Activated B cell treated with CpG ODN at 0.5 μM for 24 hours (primary cell): ENCODE measurements at regions of chr22 and their contacts with region 1.

Region 1: GRCh38 chr22:23893943-23894709 is at the start of gene MIF:
- DNase-seq: peak; percentile 100
- ATAC-seq: peak; percentile 88
- H3K4me3 Mint-ChIP-seq: peak within 1 kb of the TSS; percentile 96
- H3K27ac Mint-ChIP-seq: peak within 1 kb of the TSS; percentile 96
- H3K4me1 Mint-ChIP-seq: peaks cover 25% of the 10 kb centered on the region
- H3K27me3 Mint-ChIP-seq: no peaks in the 10 kb centered on the region
- CTCF ChIP-seq: peak; percentile 44
- total RNA-seq, gene MIF: 308 and 349 TPM in 2 replicates

Region 2: GRCh38 chr22:23800297-23801237 is 93.6 kb before region 1 on chr22:
- CTCF ChIA-PET with region 1: interaction called, 3 read pairs
- POLR2A ChIA-PET with region 1: interaction called, 3 read pairs
- intact Hi-C with region 1: loop called (anchors 1 kb)
- DNase-seq: peak; percentile 68
- ATAC-seq: peak; percentile 77
- H3K4me3 Mint-ChIP-seq: peak overlapping the region; percentile 49
- H3K27ac Mint-ChIP-seq: peak overlapping the region; percentile 97
- H3K4me1 Mint-ChIP-seq: peaks cover 78% of the 10 kb centered on the region
- H3K27me3 Mint-ChIP-seq: no peaks in the 10 kb centered on the region
- CTCF ChIP-seq: no peak

Region 3: DNA sequence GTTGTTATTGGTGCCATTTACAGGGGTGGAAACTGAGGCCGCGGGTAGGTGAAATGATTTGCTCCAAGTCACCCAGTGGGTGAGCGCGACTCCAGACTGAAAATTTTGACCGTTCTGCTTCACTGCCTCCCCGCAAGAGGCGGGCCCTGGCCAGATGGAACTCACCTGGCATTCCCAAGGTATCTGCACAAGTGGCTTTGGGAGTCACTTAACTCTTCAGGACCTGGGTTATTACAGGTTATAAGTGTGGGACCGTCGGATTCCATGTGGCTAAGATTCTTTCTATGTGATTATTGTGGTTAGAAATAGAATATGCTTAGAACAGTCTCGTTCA is 117.6 kb after region 1 on chr22:
- CTCF ChIA-PET with region 1: no interaction called
- POLR2A ChIA-PET with region 1: interaction called, 14 read pairs
- intact Hi-C with region 1: loop called (anchors 5 kb)
- DNase-seq: no peak
- ATAC-seq: no peak
- H3K4me3 Mint-ChIP-seq: peak overlapping the region; percentile 98
- H3K27ac Mint-ChIP-seq: peak overlapping the region; percentile 88
- H3K4me1 Mint-ChIP-seq: peaks cover 23% of the 10 kb centered on the region
- H3K27me3 Mint-ChIP-seq: no peaks in the 10 kb centered on the region
- CTCF ChIP-seq: no peak

Region 4: GRCh38 chr22:24270638-24271408 is 376.7 kb after region 1 on chr22 and contains the start of gene SPECC1L:
- CTCF ChIA-PET with region 1: no interaction called
- POLR2A ChIA-PET with region 1: no interaction called
- intact Hi-C with region 1: no loop called
- DNase-seq: peak; percentile 96
- ATAC-seq: peak; percentile 90
- H3K4me3 Mint-ChIP-seq: peak within 1 kb of the TSS; percentile 90
- H3K27ac Mint-ChIP-seq: peak within 1 kb of the TSS; percentile 82
- H3K4me1 Mint-ChIP-seq: peaks cover 45% of the 10 kb centered on the region
- H3K27me3 Mint-ChIP-seq: no peaks in the 10 kb centered on the region
- CTCF ChIP-seq: no peak
- total RNA-seq, gene SPECC1L: 59.0 and 64.5 TPM in 2 replicates